Ascending aorta (tissue), 2 donors: ENCODE measurements at regions of chr6 and their contacts with region 1.

Region 1: GRCh38 chr6:134882426-134883038 is 67.4 kb downstream of the ALDH8A1 start:
- DNase-seq: peak in 1 of 2 donors; percentile 84
- H3K4me3 ChIP-seq: no peak overlapping the region
- H3K27ac ChIP-seq: no peak overlapping the region
- H3K4me1 ChIP-seq: no peaks in the 10 kb centered on the region
- H3K27me3 ChIP-seq: no peaks in the 10 kb centered on the region
- CTCF ChIP-seq: peak; percentile 77 to 93 (median 84)

Region 2: DNA sequence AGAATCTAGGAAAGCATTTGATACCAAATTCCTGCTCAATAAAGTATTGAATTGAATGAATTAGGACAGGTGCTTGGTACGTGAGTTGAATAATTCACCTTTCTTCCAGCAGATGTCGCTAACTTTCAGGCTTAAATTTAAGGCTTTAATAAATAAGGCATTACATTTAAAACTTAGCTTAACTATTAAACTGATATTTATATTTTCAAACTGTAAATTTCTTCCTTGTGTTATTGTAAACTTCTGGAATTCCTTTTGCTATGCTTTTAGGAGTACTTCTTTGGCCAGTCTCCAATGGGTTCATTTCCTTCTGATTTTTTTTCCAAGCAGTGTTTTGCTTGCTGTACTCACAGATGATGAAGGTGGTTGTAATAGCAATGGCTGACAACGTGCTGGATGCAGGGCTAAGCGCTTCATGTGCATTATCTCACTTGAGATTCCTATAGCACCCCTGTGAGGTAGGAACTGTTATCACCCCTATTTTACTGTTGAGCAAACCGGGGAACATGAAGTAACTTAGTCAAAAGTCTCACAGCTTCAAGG is 758.8 kb before region 1 on chr6:
- intact Hi-C with region 1: loop called (anchors 1 kb)
- DNase-seq: no peak
- H3K4me3 ChIP-seq: no peak overlapping the region
- H3K27ac ChIP-seq: no peak overlapping the region
- H3K4me1 ChIP-seq: no peaks in the 10 kb centered on the region
- H3K27me3 ChIP-seq: no peaks in the 10 kb centered on the region
- CTCF ChIP-seq: peak; percentile 35 to 73 (median 62)

Region 3: DNA sequence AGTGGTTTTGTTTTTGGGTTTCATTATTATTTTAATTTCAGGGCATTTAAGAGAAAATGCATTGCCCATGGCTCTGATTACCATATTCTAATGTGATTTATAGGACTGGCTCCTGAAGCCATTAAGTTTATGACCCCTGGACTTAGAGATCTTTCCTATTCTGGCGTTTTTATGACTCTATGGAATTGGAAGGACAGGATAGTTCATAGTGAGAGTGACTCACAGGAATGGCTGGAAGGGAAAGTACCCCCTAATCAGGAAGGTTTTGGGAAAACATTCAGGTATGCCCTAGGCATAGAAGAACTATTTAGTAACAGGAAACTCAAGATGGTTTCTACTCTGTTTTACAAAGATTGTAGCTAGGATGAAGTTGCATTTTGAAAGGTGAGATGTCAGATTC is 721.5 kb before region 1 on chr6:
- intact Hi-C with region 1: loop called (anchors 1 kb)
- DNase-seq: no peak
- H3K4me3 ChIP-seq: no peak overlapping the region
- H3K27ac ChIP-seq: no peak overlapping the region
- H3K4me1 ChIP-seq: no peaks in the 10 kb centered on the region
- H3K27me3 ChIP-seq: no peaks in the 10 kb centered on the region
- CTCF ChIP-seq: no peak

Region 4: GRCh38 chr6:134247231-134247833 is 635.2 kb before region 1 on chr6:
- intact Hi-C with region 1: no loop called
- DNase-seq: no peak
- H3K4me3 ChIP-seq: no peak overlapping the region
- H3K27ac ChIP-seq: no peak overlapping the region
- H3K4me1 ChIP-seq: peaks cover 0 to 5% of the 10 kb centered on the region in 2 donors
- H3K27me3 ChIP-seq: no peaks in the 10 kb centered on the region
- CTCF ChIP-seq: no peak

Region 5: DNA sequence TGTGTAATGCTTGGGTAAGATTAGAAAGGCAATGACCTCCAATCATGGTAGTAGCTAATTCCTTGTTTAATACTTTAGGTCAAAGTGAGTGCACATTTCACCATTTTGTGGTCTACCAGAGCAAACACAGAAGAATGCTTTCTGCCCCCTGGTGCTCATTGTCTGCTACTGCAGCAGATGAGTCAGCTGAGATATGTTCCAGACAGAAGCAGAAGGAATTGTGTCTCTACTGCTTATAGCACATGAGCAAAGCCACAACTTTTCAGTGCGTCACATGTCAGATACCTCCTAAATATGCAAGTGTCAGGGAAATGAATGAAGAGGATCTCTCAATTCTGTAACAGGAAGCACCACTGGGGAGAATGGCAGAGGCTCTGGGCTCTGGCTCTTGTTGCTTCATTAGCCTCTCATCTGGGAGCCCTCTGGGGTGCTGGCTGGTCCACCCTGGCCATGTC is 241.5 kb before region 1 on chr6:
- intact Hi-C with region 1: loop called (anchors 5 kb)
- DNase-seq: peak; percentile 59 to 93
- H3K4me3 ChIP-seq: no peak overlapping the region
- H3K27ac ChIP-seq: no peak overlapping the region
- H3K4me1 ChIP-seq: no peaks in the 10 kb centered on the region
- H3K27me3 ChIP-seq: no peaks in the 10 kb centered on the region
- CTCF ChIP-seq: peak; percentile 90 to 94 (median 91)

Region 6: DNA sequence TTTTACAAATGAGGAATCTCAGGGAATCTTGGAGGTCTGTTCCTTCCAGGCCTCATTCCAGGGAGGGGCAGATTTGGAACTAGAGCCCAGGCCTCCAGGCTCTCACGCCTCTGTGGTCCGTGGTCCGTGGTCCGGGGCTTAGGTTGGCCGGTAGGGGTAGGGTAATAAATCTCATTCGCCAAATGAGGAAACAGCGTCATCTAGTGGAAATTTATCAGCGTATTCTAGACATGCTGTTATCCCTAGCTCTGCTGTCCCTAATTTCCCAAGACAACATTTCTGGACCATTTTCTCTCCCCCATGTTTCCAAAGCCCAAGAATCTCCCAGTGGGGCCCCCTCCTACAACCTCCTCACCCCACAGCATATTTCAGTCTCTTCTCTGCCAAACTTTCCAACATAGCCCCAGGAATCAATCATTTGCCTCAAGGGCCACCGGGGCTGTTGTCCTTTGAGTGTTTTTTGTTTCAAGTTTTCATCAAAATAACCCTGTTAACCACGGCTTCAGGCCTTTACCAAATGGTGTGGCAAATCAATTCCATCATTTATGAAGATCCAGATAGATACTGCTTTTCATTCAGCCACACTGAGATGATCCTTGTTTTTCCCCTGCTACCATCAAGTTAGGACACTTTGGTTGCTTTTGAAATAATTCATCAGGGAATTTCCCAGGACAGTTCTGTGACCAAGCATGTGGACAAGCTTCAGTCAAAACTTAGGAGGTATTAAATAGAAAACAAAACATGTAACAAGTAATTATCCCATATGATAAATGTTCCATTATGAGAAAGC is 59.4 kb before region 1 on chr6:
- intact Hi-C with region 1: loop called (anchors 2 kb)
- DNase-seq: no peak
- H3K4me3 ChIP-seq: no peak overlapping the region
- H3K27ac ChIP-seq: no peak overlapping the region
- H3K4me1 ChIP-seq: peaks cover 0 to 6% of the 10 kb centered on the region in 2 donors
- H3K27me3 ChIP-seq: no peaks in the 10 kb centered on the region
- CTCF ChIP-seq: peak; percentile 80 to 82 (median 82)

Region 7: DNA sequence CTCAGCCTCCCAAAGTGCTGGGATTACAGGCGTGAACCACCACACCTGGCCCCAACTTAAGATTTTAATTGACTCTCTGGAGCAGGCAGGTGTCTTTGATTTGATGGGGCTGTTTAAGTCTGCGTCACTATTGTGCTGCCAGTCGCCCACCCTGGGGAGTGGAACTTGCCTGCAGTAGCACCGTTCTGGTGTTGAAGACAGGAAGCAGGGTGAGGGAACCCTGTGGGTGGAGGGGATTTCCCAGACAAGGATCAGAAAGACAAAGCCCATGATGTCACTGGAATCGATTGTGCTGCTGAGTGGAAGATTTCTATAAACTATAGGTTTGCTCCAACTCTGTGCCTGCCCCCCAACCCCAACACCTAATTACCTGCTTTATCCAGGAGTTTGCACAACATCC is 56.4 kb after region 1 on chr6:
- intact Hi-C with region 1: loop called (anchors 5 kb)
- DNase-seq: no peak
- H3K4me3 ChIP-seq: no peak overlapping the region
- H3K27ac ChIP-seq: no peak overlapping the region
- H3K4me1 ChIP-seq: no peaks in the 10 kb centered on the region
- H3K27me3 ChIP-seq: no peaks in the 10 kb centered on the region
- CTCF ChIP-seq: no peak